ENCODE measurements at regions of chr3 and their contacts with region 1.

Region 1: GRCh38 chr3:161371430-161372326 is at the start of gene SPTSSB:
- DNase-seq: peak; percentile 59
- ATAC-seq: peak; percentile 81
- H3K4me3 Mint-ChIP-seq: peak within 1 kb of the TSS; percentile 64
- H3K27ac Mint-ChIP-seq: no peak within 1 kb of the TSS
- H3K4me1 Mint-ChIP-seq: peaks cover 17% of the 10 kb centered on the region
- H3K27me3 Mint-ChIP-seq: peaks cover 75% of the 10 kb centered on the region
- total RNA-seq, gene SPTSSB: not detected

Region 2: GRCh38 chr3:161409069-161409468 is 37.4 kb after region 1 on chr3:
- CTCF ChIA-PET with region 1: interaction called, 11 read pairs
- POLR2A ChIA-PET with region 1: no interaction called
- DNase-seq: peak; percentile 66
- ATAC-seq: no peak
- H3K4me3 Mint-ChIP-seq: no peak overlapping the region
- H3K27ac Mint-ChIP-seq: no peak overlapping the region
- H3K4me1 Mint-ChIP-seq: peaks cover 25% of the 10 kb centered on the region
- H3K27me3 Mint-ChIP-seq: peaks cover 53% of the 10 kb centered on the region

Measured in activated CD8-positive, alpha-beta T cell treated with anti-CD3 and anti-CD28 coated beads, Interleukin-2, amount 10 ng/mL, durations not matched to agents 7 days and 5 days (primary cell).